Spleen (tissue), 13 donors: ENCODE measurements at regions of chr16 and their contacts with region 1.

Region 1: DNA sequence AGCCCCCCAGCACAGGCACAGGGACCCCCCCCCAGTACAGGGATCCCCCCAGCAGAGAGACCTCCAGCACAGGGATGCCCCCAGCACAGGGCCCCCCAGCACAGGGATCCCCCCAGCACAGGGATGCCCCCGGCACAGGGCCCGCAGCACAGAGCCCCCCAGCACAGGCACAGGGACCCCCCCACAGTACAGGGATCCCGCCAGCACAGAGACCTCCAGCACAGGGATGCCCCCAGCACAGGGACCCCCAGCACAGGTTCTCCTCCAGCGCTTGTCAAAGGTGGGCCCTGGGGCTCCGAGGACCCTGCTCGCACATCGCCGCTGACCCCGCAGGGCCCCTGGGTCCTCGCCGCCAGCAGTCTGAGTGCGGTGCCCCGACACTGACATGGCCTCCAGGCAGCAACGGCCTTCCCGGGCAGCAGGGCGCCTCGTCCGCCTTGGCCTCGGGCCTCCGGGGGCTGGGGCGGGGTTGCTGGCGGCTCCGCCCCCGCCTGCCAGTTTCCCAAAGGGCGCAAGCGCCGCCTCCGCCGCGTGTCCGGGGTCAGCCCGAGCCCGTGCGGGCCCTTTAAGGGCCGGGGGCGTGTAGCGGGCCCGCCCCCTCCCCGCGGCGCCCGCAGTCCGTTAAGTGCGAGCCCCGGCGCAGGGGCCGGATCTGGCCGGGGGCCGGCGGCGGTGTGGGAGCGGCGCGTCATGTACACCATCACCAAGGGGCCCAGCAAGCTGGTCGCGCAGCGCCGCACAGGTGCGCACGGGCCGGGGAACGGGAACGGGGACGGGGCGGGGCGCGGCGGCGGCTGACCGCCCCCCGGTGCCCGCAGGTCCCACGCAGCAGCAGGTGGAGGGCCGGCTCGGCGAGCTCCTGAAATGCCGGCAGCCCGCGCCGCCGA is at the start of gene MCRIP2:
- DNase-seq: peak; percentile 94
- H3K4me3 ChIP-seq: peak within 1 kb of the TSS; percentile 82 to 99 (median 94)
- H3K27ac ChIP-seq: peak within 1 kb of the TSS; percentile 77 to 93 (median 88)
- H3K4me1 ChIP-seq: peaks cover 17 to 82% (median 50%) of the 10 kb centered on the region in 6 donors
- H3K27me3 ChIP-seq: peaks cover 0 to 3% (median 0%) of the 10 kb centered on the region in 7 donors
- CTCF ChIP-seq: no peak
- POLR2A ChIP-seq: peak in 1 of 3 donors; percentile 14
- total RNA-seq, gene MCRIP2: 23.6 to 45.8 (median 36.1) TPM

Region 2: DNA sequence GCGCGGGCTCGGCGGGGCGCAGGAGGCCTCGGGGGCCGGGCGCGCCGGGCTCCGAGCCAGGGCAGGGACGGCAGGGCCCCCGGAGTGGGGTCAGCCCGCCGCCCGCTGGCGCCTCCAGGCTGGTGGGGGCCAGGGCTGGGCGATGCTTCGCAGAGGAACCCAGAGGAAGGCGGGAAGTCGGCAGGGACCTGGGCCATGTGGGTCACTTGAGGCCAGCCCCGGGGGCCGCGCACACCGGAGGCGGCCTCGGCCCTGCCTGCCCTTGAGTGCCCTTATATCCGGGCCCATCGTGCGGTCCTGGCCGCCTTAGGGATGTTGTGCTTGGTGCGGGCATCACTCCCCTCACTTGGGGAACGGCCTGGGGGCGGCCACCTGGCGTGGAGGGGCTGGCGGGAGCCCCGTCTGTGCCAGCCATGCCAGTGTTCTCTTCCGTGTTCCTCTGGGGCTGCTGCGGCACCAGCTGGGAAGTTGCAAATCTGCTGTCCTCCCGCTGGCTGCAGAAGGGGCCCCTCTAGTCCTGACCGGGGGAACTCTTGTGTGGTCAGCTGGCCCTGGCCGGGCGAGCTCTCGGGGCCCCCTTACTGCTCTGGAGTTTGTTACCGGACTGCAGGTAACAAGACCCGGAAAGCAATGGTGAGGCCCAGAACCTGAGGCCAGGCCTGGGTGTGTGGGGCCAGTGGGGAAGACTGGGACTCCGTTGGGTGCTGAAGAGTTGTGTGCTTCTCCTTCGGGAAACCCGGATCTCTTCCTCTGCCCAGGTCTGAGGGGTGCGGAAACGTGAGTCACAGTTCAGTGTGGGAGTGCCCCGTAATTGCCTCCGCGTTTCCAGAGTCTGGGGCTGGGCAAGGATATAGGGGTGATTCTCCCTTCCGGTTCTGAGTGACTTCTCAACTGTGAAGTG is 113.2 kb before region 1 on chr16:
- intact Hi-C with region 1: no loop called
- DNase-seq: peak; percentile 88
- H3K4me3 ChIP-seq: peak overlapping the region; percentile 61 to 84 (median 72)
- H3K27ac ChIP-seq: peak overlapping the region; percentile 69 to 100 (median 83)
- H3K4me1 ChIP-seq: peaks cover 37 to 88% (median 69%) of the 10 kb centered on the region in 6 donors
- H3K27me3 ChIP-seq: no peaks in the 10 kb centered on the region
- CTCF ChIP-seq: no peak
- POLR2A ChIP-seq: no peak

Region 3: DNA sequence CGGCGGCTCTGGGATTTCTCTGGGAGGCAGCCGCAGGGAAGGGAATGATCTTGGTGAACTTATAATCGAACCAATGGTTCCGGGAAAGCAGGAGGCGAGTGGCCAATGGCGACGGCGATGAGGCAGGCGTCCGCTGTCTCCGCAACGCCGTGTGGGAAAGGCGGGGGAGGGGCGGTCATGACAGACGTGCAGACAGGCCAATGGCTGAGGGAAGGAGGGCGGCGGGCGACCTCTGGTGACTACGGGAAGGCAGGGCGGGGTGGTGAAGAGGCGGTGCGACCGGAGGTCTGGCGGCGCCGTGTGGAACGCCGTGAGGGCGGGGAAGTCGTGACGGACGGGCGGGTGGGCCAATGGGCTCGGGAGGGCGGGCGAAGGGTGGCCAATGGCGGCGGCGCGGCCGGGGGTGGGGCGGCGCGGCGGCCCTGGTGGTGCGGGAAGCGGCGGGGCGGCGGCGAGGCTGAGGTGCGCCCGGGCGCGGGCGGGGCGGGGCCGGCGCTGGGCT is 51.8 kb before region 1 on chr16 and contains the start of gene RAB40C:
- intact Hi-C with region 1: loop called (anchors 5 kb)
- DNase-seq: peak; percentile 99
- H3K4me3 ChIP-seq: peak within 1 kb of the TSS; percentile 68 to 100 (median 88)
- H3K27ac ChIP-seq: peak within 1 kb of the TSS; percentile 94 to 100 (median 98)
- H3K4me1 ChIP-seq: peaks cover 26 to 65% (median 55%) of the 10 kb centered on the region in 6 donors
- H3K27me3 ChIP-seq: peaks cover 0 to 9% (median 0%) of the 10 kb centered on the region in 7 donors
- CTCF ChIP-seq: peak in 7 of 11 experiments; percentile 24 to 52 (median 28)
- POLR2A ChIP-seq: no peak
- total RNA-seq, gene RAB40C: 12.9 to 21.6 (median 15.3) TPM